ENCODE measurements at regions of chr20 and their contacts with region 1.

Region 1: DNA sequence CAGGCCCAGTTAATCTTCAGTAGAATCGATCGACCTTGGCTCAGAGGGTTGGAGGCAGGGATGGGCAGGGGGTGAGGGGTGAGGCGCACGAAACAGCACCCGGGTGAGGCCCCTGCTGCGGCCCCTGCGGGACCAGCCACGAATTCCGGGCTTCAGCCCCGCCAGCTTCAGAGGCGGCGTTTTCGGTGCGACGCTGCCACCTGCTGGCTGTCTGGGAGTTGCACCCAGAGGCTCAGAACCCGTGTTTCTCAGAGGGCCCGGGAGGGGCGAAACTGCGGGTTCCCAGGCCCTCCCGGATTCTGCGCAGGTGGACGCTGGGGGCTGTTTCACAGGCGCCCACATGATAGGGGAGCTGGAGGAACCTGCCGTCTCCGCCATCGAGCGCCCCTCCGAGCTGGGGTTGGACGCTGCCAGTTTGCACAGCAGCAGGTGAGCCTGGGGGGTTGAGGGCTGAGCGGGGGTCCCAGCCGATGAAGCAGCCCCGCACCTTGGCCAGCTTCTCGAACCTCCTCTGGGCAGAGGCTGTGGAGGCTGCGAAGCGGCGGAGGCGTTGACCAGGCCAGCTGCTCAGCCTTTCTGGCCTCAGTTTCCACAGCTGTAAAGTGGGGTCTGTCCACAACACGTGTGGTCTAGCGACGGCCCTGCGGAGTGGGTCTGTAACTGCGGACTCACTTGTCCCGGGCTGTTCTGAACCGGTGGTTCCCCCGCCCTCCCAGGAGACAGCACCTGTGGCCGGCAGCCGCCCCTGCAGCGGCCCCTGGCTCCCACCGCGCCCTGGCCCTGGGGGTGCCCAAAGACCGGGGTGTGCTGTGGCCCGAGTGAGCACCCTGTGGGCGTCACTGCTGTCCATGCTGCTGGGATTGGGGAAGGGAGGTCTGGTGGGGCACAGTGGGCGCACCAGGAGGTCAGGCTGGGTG is 2.5 kb upstream of the BHLHE23 start:
- DNase-seq: peak; percentile 67 to 95
- ATAC-seq: peak; percentile 79 to 90
- H3K4me3 ChIP-seq: no peak overlapping the region
- H3K27ac ChIP-seq: peak overlapping the region in 1 of 2 experiments; percentile 44; a peak in 1 of 6 replicates
- H3K4me1 ChIP-seq: peaks cover 14% of the 10 kb centered on the region; the same call in 2 of the 3 replicates
- CTCF ChIP-seq: peak; percentile 87
- EP300 ChIP-seq: no peak
- POLR2A ChIP-seq: no peak
- RAD21 ChIP-seq: peak; percentile 94 to 95

Region 2: DNA sequence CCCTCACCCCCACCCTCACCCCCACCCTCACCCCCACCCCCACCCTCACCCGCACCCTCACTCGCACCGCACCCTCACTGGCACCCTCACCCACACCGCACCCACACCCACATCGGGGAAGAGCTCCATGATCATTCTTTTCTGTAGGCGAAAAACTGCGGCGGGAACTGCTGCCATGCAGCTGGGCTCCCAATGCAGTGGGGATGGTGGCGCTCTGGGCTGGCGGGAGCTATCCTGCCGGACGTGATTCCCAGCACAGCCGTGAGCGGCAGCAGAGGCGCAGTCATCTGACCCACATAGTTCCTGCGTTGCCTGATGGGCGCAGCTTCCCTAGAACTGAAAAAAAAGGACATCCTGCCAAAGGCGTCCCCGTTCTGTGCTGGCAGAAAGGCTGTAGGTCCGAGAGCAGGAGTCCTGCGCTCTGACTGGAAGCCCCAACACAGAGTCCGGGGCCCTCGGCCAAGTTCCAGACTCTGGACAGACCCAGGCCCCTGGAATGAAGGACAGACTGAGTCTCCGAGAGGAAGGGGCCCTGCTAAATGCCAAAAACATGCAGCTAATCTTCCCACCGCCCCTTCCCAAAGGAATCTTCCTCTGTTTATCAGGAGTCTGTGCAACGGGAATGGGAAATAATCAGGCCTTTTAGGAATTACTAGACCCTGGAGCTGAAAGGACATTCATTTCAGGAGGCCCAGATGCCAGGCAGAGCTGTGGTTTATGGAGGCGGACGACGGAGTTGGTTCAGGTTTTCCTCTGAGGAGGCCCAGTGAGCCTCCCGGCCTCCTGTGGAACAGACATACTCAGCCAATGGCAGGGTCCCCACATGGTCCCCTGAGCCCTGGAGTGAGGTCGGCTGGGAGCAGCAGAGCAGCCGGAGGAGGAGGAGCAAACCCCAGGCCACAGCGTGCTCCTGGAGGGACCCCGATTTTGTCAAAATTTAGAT is 133.6 kb before region 1 on chr20:
- CTCF ChIA-PET with region 1: interaction called, 31 read pairs
- POLR2A ChIA-PET with region 1: no interaction called
- DNase-seq: peak; percentile 91 to 94
- ATAC-seq: peak; percentile 94
- H3K4me3 ChIP-seq: peak overlapping the region; percentile 35
- H3K27ac ChIP-seq: peak overlapping the region; percentile 84 to 89
- H3K4me1 ChIP-seq: peaks cover 15% of the 10 kb centered on the region
- CTCF ChIP-seq: peak; percentile 41
- EP300 ChIP-seq: no peak
- POLR2A ChIP-seq: no peak
- RAD21 ChIP-seq: peak in 1 of 2 experiments; percentile 24; a peak in 1 of 5 replicates

Region 3: GRCh38 chr20:62900052-62900691 is 109.1 kb before region 1 on chr20:
- CTCF ChIA-PET with region 1: interaction called, 33 read pairs
- POLR2A ChIA-PET with region 1: no interaction called
- DNase-seq: peak; percentile 59 to 92
- ATAC-seq: peak; percentile 93 to 94
- H3K4me3 ChIP-seq: no peak overlapping the region
- H3K27ac ChIP-seq: no peak overlapping the region
- H3K4me1 ChIP-seq: peaks cover 5% of the 10 kb centered on the region; the same call in 2 of the 3 replicates
- CTCF ChIP-seq: peak; percentile 64
- EP300 ChIP-seq: no peak
- POLR2A ChIP-seq: no peak
- RAD21 ChIP-seq: peak; percentile 59 to 62

Region 4: GRCh38 chr20:62953839-62954703 is 55.2 kb before region 1 on chr20:
- CTCF ChIA-PET with region 1: interaction called, 19 read pairs
- POLR2A ChIA-PET with region 1: no interaction called
- DNase-seq: no peak
- ATAC-seq: no peak
- H3K4me3 ChIP-seq: no peak overlapping the region
- H3K27ac ChIP-seq: no peak overlapping the region
- H3K4me1 ChIP-seq: peaks cover 9% of the 10 kb centered on the region; the same call in 2 of the 3 replicates
- CTCF ChIP-seq: no peak
- EP300 ChIP-seq: no peak
- POLR2A ChIP-seq: no peak
- RAD21 ChIP-seq: no peak

Region 5: DNA sequence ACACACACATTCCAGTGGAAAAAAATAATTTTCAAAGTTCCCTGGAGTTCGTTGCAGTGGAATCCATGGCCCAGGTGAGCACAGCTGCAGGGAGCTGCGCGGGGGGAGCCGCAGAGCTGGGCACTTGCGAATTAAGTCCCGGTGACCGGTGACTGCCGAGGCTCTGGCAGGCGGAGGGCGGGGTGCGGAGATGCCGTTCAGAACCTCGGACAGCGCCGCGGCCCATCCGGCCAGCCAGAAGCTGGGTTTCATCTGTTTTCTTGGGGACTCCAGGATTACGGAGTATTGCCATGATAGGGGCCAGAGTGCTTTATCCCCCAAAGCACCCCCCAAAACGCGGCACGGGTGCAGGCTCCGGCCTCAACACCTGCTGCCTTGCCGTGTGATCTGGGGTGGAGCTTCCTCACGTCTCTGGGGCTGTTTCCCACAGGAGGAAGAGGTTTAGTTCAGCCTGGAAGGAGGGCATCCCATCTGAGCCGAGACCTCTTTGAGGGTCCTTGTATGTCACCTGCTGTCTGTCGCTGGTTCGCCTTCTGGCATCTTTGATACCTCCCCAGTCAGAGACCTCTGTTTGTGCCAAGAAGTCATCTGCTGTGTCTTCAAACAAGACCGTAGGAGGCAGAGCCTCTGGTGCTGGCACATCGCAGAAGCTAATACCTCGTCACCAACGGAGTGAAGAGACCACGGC is 107.3 kb after region 1 on chr20:
- CTCF ChIA-PET with region 1: no interaction called
- POLR2A ChIA-PET with region 1: no interaction called
- DNase-seq: peak in 1 of 2 experiments; percentile 56
- ATAC-seq: peak; percentile 35 to 56; a peak in 3 of 6 replicates
- H3K4me3 ChIP-seq: no peak overlapping the region
- H3K27ac ChIP-seq: no peak overlapping the region
- H3K4me1 ChIP-seq: no peaks in the 10 kb centered on the region
- CTCF ChIP-seq: no peak
- EP300 ChIP-seq: no peak
- POLR2A ChIP-seq: no peak
- RAD21 ChIP-seq: no peak

Measured in A549 (cell line).